CD4-positive, alpha-beta memory T cell (primary cell): ENCODE measurements at regions of chr3 and their contacts with region 1.

Region 1: DNA sequence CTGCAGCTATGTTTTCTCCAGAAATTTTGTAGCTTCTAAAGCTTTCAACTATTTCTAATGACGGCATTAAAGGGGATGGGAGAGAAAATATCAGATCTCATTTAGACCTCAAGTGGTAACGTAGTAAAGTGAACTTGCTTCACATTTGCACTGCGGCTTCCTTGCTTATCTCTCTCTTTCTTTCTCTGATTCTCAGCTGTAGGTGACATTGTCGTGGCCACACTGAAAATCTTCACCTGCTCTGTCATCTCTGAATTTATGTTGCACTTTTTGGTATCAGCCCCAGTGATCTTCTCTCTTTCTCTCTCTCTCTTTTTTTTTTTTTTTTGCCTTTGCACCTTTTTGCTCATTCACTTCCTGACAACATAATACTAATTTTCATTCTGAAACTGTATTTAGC is 254.1 kb upstream of the SATB1 start:
- DNase-seq: peak; percentile 46 to 65 (median 58)
- H3K4me3 ChIP-seq: no peak overlapping the region
- H3K4me3 Mint-ChIP-seq: peak overlapping the region; percentile 52 to 87 (median 70)
- H3K27ac ChIP-seq: no peak overlapping the region
- H3K27ac Mint-ChIP-seq: peak overlapping the region; percentile 30 to 90 (median 76)
- H3K4me1 ChIP-seq: peaks cover 52% of the 10 kb centered on the region
- H3K4me1 Mint-ChIP-seq: peaks cover 53 to 73% (median 63%) of the 10 kb centered on the region in 4 donors
- H3K27me3 ChIP-seq: no peaks in the 10 kb centered on the region
- H3K27me3 Mint-ChIP-seq: no peaks in the 10 kb centered on the region

Region 2: DNA sequence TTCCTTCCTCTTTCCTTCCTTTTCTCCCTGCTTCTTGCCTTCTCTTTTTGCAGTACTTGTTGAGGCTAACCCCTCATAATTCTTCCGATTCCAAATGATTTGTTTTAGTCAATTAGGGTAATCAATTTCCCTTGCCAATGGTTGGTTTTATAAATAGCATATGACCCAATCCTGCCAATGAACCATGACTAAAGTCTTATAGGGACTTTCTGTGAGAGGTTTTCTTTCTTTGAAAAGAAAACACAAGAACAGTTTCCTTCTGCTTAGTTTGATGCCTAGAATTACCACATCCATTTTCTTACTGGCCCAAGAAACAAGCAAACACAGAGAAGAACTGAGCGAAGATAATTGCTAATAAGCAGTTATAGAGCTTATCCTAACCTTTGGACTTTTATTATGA is 38.4 kb after region 1 on chr3:
- CTCF ChIA-PET with region 1: interaction called, 7 read pairs
- POLR2A ChIA-PET with region 1: interaction called, 12 read pairs
- intact Hi-C with region 1: no loop called
- DNase-seq: no peak
- H3K4me3 ChIP-seq: no peak overlapping the region
- H3K4me3 Mint-ChIP-seq: peak overlapping the region in 6 of 8 donors; percentile 14 to 66 (median 51)
- H3K27ac ChIP-seq: no peak overlapping the region
- H3K27ac Mint-ChIP-seq: peak overlapping the region; percentile 33 to 85 (median 61)
- H3K4me1 ChIP-seq: peaks cover 58% of the 10 kb centered on the region
- H3K4me1 Mint-ChIP-seq: peaks cover 50 to 68% (median 62%) of the 10 kb centered on the region in 4 donors
- H3K27me3 ChIP-seq: no peaks in the 10 kb centered on the region
- H3K27me3 Mint-ChIP-seq: no peaks in the 10 kb centered on the region

Region 3: DNA sequence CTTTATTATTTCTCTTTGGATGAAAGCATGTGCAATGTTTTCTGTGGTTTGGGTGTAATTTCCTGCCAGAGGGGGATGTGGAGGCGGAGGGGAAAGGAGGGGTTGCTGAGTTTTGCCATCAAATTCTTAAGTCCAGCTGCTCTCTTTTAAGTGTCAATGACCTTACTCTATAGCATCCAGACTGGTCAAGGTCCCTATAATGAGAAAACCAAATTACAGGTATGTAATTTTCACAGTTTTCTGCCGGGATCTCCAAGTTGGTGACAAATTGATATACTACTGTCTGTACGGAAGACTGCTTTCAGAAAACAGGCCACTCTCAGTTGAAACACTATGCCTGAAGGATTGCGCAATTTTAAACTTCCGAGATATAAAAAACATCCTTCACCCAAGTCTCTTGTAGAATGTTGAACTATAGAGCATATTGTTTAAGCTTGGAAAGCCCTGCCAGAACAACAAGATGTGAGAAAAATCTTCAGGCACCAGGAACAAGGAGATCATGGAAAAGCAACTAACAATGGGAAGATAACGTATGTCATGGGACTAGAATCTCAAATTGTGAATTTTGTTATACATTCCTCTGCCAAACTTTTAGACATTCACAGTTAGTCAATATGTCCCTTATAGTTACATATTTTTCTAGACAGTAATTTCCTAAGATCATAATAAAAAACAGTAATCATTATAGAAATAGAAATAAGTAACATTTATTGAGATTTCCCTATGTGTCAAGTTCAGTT is 46.6 kb after region 1 on chr3:
- CTCF ChIA-PET with region 1: interaction called, 7 read pairs
- POLR2A ChIA-PET with region 1: interaction called, 7 read pairs
- intact Hi-C with region 1: loop called (anchors 2 kb)
- DNase-seq: peak; percentile 56 to 74 (median 68)
- H3K4me3 ChIP-seq: peak overlapping the region in 1 of 2 donors; percentile 6
- H3K4me3 Mint-ChIP-seq: peak overlapping the region; percentile 56 to 80 (median 76)
- H3K27ac ChIP-seq: peak overlapping the region; percentile 53
- H3K27ac Mint-ChIP-seq: peak overlapping the region; percentile 92 to 99 (median 94)
- H3K4me1 ChIP-seq: peaks cover 74% of the 10 kb centered on the region
- H3K4me1 Mint-ChIP-seq: peaks cover 64 to 79% (median 72%) of the 10 kb centered on the region in 4 donors
- H3K27me3 ChIP-seq: no peaks in the 10 kb centered on the region
- H3K27me3 Mint-ChIP-seq: no peaks in the 10 kb centered on the region

Region 4: DNA sequence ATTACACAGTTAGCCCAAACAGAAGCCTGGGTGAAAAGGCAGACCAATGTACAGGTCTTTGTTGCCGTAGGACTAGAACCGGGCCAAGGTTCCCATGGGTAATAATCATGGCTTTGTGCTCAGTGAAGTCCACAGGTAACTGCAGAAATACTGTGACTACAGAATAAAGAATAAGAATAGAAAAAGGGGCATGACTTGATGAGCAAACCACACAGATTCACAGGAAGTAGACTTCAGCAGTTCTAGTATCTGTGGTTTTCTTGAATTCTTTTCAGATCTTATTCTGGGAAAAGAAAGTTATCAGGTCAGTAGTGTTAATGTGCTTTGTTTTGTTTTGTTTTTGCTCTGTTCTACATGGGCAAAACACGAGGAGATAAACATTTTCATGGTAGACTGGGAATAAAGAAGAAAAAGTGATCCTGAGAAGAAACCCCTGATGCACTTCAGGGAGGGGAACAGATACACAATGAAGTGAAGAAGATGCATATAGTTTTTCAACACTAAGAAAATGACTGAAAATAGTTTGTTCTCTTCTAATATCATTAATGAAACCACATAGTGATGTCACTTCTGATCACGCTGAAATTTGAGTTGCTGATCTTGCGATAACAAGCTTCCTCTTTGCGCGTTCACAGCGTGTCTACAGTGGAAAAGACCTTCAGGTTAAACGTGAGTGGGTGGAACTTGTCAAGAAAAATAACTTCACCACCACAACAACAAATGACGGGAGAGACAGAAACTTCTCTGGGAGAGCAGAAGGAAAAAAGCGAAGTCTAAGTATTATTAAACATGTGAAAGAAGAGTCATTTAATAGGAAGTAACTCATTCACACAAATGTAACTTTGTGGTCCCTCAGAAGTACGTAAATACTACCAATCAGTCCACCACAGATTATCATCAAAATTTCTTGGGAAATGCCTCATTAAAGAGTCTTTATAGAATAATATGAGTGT is 61.7 kb after region 1 on chr3:
- CTCF ChIA-PET with region 1: no interaction called
- POLR2A ChIA-PET with region 1: interaction called, 8 read pairs
- intact Hi-C with region 1: loop called (anchors 2 kb)
- DNase-seq: peak; percentile 78 to 87 (median 82)
- H3K4me3 ChIP-seq: peak overlapping the region in 1 of 2 donors; percentile 35
- H3K4me3 Mint-ChIP-seq: peak overlapping the region; percentile 69 to 87 (median 81)
- H3K27ac ChIP-seq: peak overlapping the region; percentile 60
- H3K27ac Mint-ChIP-seq: peak overlapping the region; percentile 88 to 97 (median 95)
- H3K4me1 ChIP-seq: peaks cover 79% of the 10 kb centered on the region
- H3K4me1 Mint-ChIP-seq: peaks cover 67 to 77% (median 72%) of the 10 kb centered on the region in 4 donors
- H3K27me3 ChIP-seq: no peaks in the 10 kb centered on the region
- H3K27me3 Mint-ChIP-seq: no peaks in the 10 kb centered on the region